Activated CD8-positive, alpha-beta T cell treated with anti-CD3 and anti-CD28 coated beads for 36 hours (primary cell): ENCODE measurements at regions of chr3 and their contacts with region 1.

Region 1: GRCh38 chr3:136075218-136075808 is 109.8 kb downstream of the PPP2R3A start:
- DNase-seq: peak; percentile 80
- ATAC-seq: peak; percentile 53
- H3K4me3 Mint-ChIP-seq: no peak overlapping the region
- H3K27ac Mint-ChIP-seq: no peak overlapping the region
- H3K4me1 Mint-ChIP-seq: no peaks in the 10 kb centered on the region
- H3K27me3 Mint-ChIP-seq: no peaks in the 10 kb centered on the region
- CTCF ChIP-seq: peak; percentile 88

Region 2: DNA sequence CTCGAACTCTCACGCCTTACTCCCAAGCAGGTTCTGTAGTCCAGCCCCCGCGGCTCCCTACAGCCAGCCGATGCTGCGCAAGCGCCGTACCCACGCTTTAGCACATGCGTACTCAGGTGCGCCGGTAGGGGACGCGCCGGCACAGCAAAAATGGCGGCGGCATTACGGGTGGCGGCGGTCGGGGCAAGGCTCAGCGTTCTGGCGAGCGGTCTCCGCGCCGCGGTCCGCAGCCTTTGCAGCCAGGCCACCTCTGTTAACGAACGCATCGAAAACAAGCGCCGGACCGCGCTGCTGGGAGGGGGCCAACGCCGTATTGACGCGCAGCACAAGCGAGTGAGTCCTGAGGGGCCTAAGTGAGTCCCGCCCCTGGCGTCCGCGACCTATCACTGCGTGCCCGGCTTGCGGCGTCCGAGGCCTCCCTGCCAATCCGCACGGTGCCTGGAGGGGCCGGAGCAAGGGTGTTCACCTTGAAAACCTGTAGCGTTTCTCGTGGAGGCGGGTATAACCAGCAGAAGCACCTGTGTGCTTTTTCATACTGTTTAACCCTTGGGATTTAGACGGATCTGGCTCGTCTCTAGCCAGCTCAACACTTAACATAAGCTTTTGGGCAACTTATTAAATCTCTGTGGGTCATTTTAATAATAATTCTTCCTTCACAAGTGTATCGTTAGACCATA is 175.1 kb after region 1 on chr3 and contains the start of gene PCCB:
- CTCF ChIA-PET with region 1: interaction called, 10 read pairs
- POLR2A ChIA-PET with region 1: no interaction called
- intact Hi-C with region 1: loop called (anchors 5 kb)
- DNase-seq: peak; percentile 96
- ATAC-seq: peak; percentile 98
- H3K4me3 Mint-ChIP-seq: peak within 1 kb of the TSS; percentile 84
- H3K27ac Mint-ChIP-seq: peak within 1 kb of the TSS; percentile 96
- H3K4me1 Mint-ChIP-seq: peaks cover 16% of the 10 kb centered on the region
- H3K27me3 Mint-ChIP-seq: no peaks in the 10 kb centered on the region
- CTCF ChIP-seq: peak; percentile 83
- total RNA-seq, gene PCCB: 61.5 to 61.8 TPM

Region 3: GRCh38 chr3:136255672-136256406 is 180.5 kb after region 1 on chr3:
- CTCF ChIA-PET with region 1: interaction called, 10 read pairs
- POLR2A ChIA-PET with region 1: no interaction called
- intact Hi-C with region 1: loop called (anchors 5 kb)
- DNase-seq: no peak
- ATAC-seq: no peak
- H3K4me3 Mint-ChIP-seq: no peak overlapping the region
- H3K27ac Mint-ChIP-seq: no peak overlapping the region
- H3K4me1 Mint-ChIP-seq: peaks cover 9% of the 10 kb centered on the region
- H3K27me3 Mint-ChIP-seq: no peaks in the 10 kb centered on the region
- CTCF ChIP-seq: no peak

Region 4: DNA sequence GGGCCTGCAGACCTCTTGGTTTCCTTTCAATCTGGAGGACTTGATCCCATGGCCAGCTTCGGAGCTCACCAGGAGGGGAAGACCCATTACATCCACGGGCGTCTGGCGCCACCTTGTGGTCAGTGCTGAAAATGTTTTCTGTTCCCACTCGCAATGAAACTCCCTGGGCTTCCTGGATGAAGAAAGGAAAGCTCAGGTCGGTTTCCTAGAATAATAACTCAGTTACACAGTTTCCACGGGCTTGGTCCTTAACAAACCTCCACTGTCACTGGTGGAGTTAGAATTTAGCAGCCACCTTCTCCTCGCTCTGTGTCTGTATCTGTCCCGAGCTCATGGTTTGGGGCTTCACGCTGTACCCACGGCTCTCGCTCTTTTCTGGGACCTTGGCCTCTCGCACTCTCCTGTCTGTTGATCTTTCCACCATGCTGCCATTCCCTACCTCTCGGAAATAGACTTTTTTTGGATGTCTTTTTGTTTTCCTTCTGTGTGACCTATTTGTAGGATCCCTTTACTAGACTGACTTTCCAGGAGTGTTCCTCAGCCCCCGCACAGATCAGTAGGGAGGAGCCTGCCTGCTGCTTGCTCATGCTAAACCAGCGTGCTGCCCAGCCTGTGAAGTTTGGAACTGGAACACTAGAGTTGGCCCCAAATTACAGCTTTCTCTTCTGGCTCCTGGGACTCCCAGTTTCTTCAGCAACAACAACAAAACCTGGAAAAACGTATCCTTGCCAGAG is 938.8 kb after region 1 on chr3:
- CTCF ChIA-PET with region 1: interaction called, 9 read pairs
- POLR2A ChIA-PET with region 1: no interaction called
- intact Hi-C with region 1: loop called (anchors 2 kb)
- DNase-seq: peak; percentile 85
- ATAC-seq: peak; percentile 88
- H3K4me3 Mint-ChIP-seq: peak overlapping the region; percentile 63
- H3K27ac Mint-ChIP-seq: peak overlapping the region; percentile 70
- H3K4me1 Mint-ChIP-seq: peaks cover 8% of the 10 kb centered on the region
- H3K27me3 Mint-ChIP-seq: no peaks in the 10 kb centered on the region
- CTCF ChIP-seq: peak; percentile 85